Adrenal gland (tissue), 19 donors: ENCODE measurements at regions of chr17 and their contacts with region 1.

Region 1: DNA sequence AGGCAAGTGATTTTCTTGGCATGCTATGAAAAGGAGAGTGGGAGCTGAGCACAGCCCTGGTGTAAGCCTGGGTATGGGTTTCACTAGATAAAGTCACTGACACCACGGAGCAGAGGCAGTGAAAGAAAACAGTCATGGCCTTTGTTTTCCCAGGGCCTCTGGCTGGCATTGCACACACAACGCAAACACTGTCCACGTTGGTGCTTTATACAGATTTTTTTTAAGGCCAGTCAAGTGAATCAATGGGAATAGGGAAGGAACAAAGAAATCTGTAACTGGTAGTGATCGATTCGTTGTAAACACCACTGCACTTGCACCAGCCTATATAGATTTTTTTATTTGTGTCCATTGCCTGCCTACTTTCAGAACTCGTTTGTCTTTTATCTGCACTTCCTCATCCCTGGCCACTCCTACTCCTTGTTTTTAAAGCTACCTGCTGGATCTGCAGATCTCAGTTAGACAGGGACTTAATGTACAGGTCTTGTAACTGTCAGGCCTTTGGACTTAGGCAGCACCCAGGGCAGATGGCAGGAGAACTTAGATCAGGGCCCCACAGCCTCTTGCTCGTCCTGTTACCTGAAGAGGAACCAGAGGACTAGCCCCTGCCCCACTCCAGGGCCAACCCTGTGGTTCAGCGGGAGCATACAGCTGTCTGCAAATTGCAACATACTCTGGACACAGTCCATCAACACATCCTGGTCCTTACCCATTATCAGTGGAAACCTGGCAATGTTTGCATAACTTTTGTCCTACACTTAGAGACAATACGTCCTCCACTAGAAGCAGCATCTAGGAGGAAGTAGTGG is 10.6 kb upstream of the TMIGD1 start:
- DNase-seq: peak; percentile 11 to 63 (median 29)
- H3K4me3 ChIP-seq: no peak overlapping the region
- H3K27ac ChIP-seq: peak overlapping the region in 2 of 5 donors; percentile 8 to 69
- H3K4me1 ChIP-seq: peaks cover 0 to 18% of the 10 kb centered on the region in 2 donors
- H3K27me3 ChIP-seq: no peaks in the 10 kb centered on the region
- CTCF ChIP-seq: no peak
- POLR2A ChIP-seq: no peak

Region 2: DNA sequence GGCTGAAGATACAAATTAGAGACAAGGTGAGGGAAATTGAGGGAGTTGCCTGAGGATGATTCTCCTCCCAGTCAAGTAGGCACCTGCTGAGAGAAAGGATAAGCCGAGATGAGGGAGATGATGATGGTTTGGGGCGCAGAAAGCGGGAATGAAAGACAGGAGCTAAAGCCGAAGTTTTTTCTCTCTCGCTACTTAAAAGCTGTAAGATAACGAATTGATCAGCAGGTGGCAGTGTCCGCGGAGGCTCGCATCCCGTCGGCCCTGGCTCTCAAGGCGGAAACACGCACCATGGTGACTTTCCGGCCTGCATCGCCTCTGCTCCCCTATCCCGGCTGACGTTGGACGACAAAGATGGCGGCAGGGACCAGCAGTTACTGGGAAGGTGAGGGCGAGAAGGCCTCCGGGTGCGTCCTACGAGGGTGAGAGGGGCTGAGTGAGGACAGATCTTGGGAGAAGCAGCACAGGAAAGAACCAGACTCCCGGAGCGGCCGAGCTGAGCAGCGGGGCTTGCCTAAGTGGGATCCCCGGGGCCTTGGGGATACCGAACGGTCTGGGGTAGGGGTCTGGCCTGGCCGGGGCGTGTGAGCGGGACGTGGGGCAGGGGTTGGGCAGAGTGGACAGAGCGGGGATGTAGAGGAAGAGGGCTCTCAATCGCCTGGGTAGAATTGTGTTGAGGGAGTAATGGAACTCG is 132.7 kb after region 1 on chr17 and contains the start of gene GOSR1:
- intact Hi-C with region 1: loop called in 1 of 2 experiments (anchors 10 kb)
- DNase-seq: peak; percentile 92 to 98 (median 97)
- H3K4me3 ChIP-seq: peak within 1 kb of the TSS; percentile 75 to 100 (median 99)
- H3K27ac ChIP-seq: peak within 1 kb of the TSS; percentile 91 to 96 (median 94)
- H3K4me1 ChIP-seq: peaks cover 8 to 19% of the 10 kb centered on the region in 2 donors
- H3K27me3 ChIP-seq: no peaks in the 10 kb centered on the region
- CTCF ChIP-seq: peak; percentile 58 to 78 (median 77)
- POLR2A ChIP-seq: peak; percentile 35 to 70
- total RNA-seq, gene GOSR1: 29.6 to 96.0 (median 50.2) TPM